ENCODE measurements at regions of chr7 and their contacts with region 1.

Region 1: GRCh38 chr7:3065724-3066143 is 22.1 kb upstream of the CARD11 start:
- DNase-seq: peak; percentile 47 to 72 (median 55)
- H3K4me3 ChIP-seq: no peak overlapping the region
- H3K4me3 Mint-ChIP-seq: peak overlapping the region; percentile 54 to 91 (median 69)
- H3K27ac ChIP-seq: no peak overlapping the region
- H3K27ac Mint-ChIP-seq: peak overlapping the region; percentile 67 to 98 (median 90)
- H3K4me1 ChIP-seq: peaks cover 78% of the 10 kb centered on the region
- H3K4me1 Mint-ChIP-seq: peaks cover 75 to 87% (median 83%) of the 10 kb centered on the region in 3 donors
- H3K27me3 ChIP-seq: no peaks in the 10 kb centered on the region
- H3K27me3 Mint-ChIP-seq: no peaks in the 10 kb centered on the region

Region 2: DNA sequence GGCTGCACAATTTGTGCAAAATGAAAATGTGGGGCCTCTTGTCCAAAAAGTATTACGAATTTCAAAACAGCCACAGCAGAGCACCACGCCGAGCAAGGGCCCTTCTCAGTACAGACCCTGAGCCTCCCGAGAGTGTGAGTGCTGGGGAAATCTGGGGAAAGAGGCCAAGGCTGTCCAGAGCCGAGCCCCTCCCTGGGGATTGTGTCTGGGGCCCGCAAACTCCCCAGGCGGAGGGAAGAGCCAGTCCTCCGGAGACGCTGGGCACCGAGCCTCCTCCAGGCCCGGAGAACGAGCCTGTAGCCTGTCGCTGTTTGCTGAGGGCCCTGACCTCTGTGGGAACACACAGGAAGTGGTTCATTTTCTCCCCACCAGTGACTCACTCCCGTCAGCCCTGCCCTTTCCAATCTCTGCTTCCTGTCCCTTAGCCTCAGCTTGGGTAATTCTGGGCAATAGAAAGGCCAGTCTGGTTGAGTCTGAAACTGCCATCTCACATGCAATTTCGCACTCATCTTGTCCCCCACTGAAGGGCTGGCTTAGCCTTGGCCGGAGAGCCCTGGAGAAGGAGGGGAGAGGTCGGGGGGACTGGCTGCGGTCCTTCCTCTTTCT is 202.2 kb before region 1 on chr7:
- CTCF ChIA-PET with region 1: interaction called, 17 read pairs
- POLR2A ChIA-PET with region 1: no interaction called
- DNase-seq: peak; percentile 24 to 82 (median 61)
- H3K4me3 ChIP-seq: peak overlapping the region; percentile 32
- H3K4me3 Mint-ChIP-seq: peak overlapping the region; percentile 37 to 89 (median 67)
- H3K27ac ChIP-seq: peak overlapping the region; percentile 43
- H3K27ac Mint-ChIP-seq: peak overlapping the region; percentile 59 to 97 (median 89)
- H3K4me1 ChIP-seq: peaks cover 23% of the 10 kb centered on the region
- H3K4me1 Mint-ChIP-seq: peaks cover 26 to 28% (median 27%) of the 10 kb centered on the region in 3 donors
- H3K27me3 ChIP-seq: no peaks in the 10 kb centered on the region
- H3K27me3 Mint-ChIP-seq: peaks cover 0 to 2% of the 10 kb centered on the region in 2 donors

Region 3: GRCh38 chr7:2873686-2874551 is 191.8 kb before region 1 on chr7:
- CTCF ChIA-PET with region 1: no interaction called
- POLR2A ChIA-PET with region 1: no interaction called
- DNase-seq: no peak
- H3K4me3 ChIP-seq: no peak overlapping the region
- H3K4me3 Mint-ChIP-seq: no peak overlapping the region
- H3K27ac ChIP-seq: no peak overlapping the region
- H3K27ac Mint-ChIP-seq: peak overlapping the region in 2 of 8 donors; percentile 3 to 12
- H3K4me1 ChIP-seq: peaks cover 38% of the 10 kb centered on the region
- H3K4me1 Mint-ChIP-seq: peaks cover 17 to 24% (median 23%) of the 10 kb centered on the region in 3 donors
- H3K27me3 ChIP-seq: no peaks in the 10 kb centered on the region
- H3K27me3 Mint-ChIP-seq: no peaks in the 10 kb centered on the region

Region 4: DNA sequence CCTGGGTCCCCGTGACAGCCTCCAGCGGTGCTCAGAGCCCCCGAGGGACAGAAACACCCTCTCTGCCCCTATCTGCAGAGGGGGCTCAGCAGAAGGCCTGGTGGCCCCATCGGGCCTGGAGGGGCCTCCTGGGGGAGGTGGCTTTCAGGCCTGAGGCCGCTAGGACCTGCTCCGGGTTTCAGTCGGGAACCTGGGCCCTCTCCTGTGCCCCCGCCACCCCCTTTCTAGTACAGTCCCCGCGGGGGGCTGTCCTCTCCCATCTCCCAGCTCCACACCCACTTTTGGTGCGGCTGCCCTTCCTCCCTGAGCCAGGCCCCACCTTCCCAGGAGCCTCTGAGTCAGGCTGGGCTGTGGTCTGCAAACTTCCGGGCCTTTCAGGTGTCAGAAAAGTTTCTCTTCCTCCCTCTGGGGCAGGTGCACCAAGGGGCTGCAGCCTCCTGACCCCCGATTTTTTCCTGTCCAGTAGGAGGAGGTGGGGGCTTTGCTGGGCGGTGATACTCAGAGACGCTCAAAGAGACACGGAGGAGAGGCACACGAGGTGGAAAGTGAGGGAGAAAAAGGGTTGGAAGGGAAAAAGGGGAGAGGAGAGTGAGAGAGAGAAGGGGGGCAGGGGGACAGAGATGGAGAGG is 22.8 kb before region 1 on chr7:
- CTCF ChIA-PET with region 1: interaction called, 13 read pairs
- POLR2A ChIA-PET with region 1: interaction called, 4 read pairs
- DNase-seq: peak; percentile 53 to 82 (median 64)
- H3K4me3 ChIP-seq: peak overlapping the region; percentile 82
- H3K4me3 Mint-ChIP-seq: peak overlapping the region; percentile 93 to 99 (median 96)
- H3K27ac ChIP-seq: peak overlapping the region; percentile 76
- H3K27ac Mint-ChIP-seq: peak overlapping the region; percentile 69 to 98 (median 94)
- H3K4me1 ChIP-seq: peaks cover 53% of the 10 kb centered on the region
- H3K4me1 Mint-ChIP-seq: peaks cover 45 to 63% (median 54%) of the 10 kb centered on the region in 3 donors
- H3K27me3 ChIP-seq: no peaks in the 10 kb centered on the region
- H3K27me3 Mint-ChIP-seq: peaks cover 0 to 2% of the 10 kb centered on the region in 2 donors

Region 5: DNA sequence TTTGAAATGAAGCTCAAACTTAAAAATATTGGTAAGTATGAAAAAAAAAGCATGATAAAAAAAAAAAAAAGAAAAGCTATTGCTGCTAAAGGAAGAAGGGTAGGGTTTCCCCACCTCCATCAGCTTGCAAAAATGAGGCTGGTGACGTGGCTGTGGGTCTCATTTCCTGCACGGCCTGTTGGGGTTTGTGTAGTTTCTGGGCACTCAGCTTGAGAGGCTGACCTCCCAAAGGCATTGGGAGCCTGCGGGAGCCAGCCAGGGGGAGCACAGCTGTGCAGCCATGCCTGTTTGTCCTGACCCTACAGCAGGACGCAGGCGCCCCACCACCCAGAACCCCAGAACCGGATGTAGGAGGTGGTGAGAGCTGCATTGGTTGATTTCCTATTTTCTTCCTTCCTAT is 26.7 kb after region 1 on chr7:
- CTCF ChIA-PET with region 1: interaction called, 44 read pairs
- POLR2A ChIA-PET with region 1: interaction called, 22 read pairs
- DNase-seq: peak; percentile 56 to 86 (median 78)
- H3K4me3 ChIP-seq: peak overlapping the region; percentile 27
- H3K4me3 Mint-ChIP-seq: peak overlapping the region; percentile 67 to 81 (median 75)
- H3K27ac ChIP-seq: peak overlapping the region; percentile 51
- H3K27ac Mint-ChIP-seq: peak overlapping the region; percentile 88 to 99 (median 98)
- H3K4me1 ChIP-seq: peaks cover 75% of the 10 kb centered on the region
- H3K4me1 Mint-ChIP-seq: peaks cover 67 to 80% (median 78%) of the 10 kb centered on the region in 3 donors
- H3K27me3 ChIP-seq: no peaks in the 10 kb centered on the region
- H3K27me3 Mint-ChIP-seq: no peaks in the 10 kb centered on the region

Measured in CD8-positive, alpha-beta memory T cell (primary cell).